Activated naive CD4-positive, alpha-beta T cell treated with anti-CD3 and anti-CD28 coated beads for 36 hours (primary cell): ENCODE measurements at regions of chr3 and their contacts with region 1.

Region 1: DNA sequence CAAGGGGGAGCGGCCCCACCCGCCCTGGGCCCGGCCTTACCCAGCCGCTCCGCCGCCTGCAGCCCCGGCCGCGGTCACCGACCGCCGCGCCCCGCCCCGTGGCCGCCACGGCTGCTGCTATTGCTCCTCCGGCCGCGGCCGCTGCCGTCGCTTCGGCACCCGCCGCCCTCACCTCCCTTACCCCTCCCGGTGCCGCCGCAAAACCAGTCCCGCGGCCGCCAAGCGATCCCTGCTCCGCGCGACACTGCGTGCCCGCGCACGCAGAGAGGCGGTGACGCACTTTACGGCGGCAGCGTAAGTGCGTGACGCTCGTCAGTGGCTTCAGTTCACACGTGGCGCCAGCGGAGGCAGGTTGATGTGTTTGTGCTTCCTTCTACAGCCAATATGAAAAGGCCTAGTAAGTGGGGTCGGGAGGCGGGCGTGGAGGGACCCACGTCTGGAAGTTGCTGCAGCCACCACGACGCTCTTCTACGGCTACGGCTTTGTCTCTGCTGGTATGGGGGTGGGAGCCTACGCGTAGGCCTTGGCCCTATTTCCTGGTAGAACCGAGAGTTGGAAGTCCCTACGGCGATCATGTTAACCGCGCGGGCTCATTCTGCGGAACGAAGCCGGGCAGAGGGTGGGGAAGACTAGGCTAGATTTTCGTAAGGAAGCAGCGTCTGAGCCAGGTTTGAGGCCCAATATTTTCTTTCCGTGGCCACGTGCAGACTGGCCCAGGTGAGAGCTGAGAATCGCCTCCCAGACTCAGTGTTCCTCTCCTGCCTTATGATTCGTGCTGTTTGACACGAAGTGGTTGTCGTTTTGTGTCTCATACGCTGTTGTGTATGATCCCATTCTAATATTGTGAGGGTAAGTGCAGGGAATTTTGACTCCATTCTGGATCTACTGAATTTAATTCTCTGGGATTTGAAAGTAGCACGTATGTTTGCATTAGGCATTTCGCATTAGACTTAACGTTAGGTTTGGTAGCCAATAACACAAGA is at the starts of genes GNL3 and PBRM1:
- DNase-seq: peak; percentile 95
- H3K4me3 Mint-ChIP-seq: peak within 1 kb of the TSS; percentile 90
- H3K27ac Mint-ChIP-seq: peak within 1 kb of the TSS; percentile 91
- H3K4me1 Mint-ChIP-seq: peaks cover 72% of the 10 kb centered on the region
- H3K27me3 Mint-ChIP-seq: no peaks in the 10 kb centered on the region
- total RNA-seq, gene GNL3: 195 to 197 TPM
- total RNA-seq, gene PBRM1: 49.9 to 57.7 TPM

Region 2: DNA sequence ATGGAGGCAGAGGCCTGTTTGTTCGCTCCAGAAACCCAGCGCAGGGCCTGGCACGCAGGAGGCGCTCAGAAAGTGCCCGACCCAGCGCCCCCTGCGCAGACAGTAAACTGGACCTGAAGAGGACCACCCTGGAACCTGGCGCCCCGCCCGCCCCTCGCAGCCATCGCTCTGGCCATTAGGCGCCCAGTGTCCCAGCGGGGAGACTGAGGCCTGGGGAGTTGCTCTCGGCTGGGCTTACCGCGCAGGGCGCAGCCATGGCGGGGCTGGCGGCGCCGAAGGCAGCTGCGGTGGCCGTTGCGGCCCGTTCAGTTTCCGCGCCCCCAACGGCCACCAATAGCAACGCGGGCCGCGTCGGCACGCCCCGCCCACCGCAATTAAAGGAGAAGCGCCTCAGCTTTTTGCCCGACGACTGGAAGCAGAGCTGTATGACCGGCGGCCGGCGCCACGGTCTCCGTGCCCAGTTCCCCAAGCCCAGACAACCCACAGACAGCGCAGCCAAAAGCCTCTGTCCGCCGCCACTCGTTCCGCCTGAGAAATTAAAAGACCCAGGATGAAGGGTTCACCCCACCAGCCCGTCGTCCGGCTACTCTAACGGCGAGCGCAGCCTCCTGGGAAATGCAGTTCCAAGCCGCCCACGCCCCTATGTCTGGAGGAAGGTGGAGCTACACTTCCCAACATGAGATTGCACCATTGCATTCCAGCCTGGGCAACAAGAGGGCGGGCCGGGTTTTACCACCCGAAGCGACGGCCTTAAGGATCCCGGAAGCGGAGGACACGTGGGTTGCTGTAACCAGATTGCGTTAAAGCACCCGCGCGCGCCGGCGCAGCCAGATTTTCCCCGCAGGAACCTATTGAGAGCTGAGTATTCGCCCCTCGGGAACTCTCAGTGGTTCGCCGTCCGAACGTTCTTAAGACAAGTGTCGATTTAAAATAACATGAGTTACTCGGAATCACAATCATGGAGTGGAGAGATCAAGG is 531.6 kb before region 1 on chr3 and contains the start of gene POC1A:
- CTCF ChIA-PET with region 1: no interaction called
- intact Hi-C with region 1: loop called (anchors 1 kb)
- DNase-seq: peak; percentile 96
- H3K4me3 Mint-ChIP-seq: peak within 1 kb of the TSS; percentile 91
- H3K27ac Mint-ChIP-seq: peak within 1 kb of the TSS; percentile 92
- H3K4me1 Mint-ChIP-seq: peaks cover 18% of the 10 kb centered on the region
- H3K27me3 Mint-ChIP-seq: no peaks in the 10 kb centered on the region
- total RNA-seq, gene POC1A: 32.3 to 32.7 TPM

Region 3: GRCh38 chr3:52455283-52456168 is 230.5 kb before region 1 on chr3 and contains the start of gene NISCH:
- CTCF ChIA-PET with region 1: no interaction called
- intact Hi-C with region 1: loop called (anchors 2 kb)
- DNase-seq: peak; percentile 96
- H3K4me3 Mint-ChIP-seq: peak within 1 kb of the TSS; percentile 94
- H3K27ac Mint-ChIP-seq: peak within 1 kb of the TSS; percentile 96
- H3K4me1 Mint-ChIP-seq: peaks cover 35% of the 10 kb centered on the region
- H3K27me3 Mint-ChIP-seq: no peaks in the 10 kb centered on the region
- total RNA-seq, gene NISCH: 50.4 to 52.5 TPM

Region 4: GRCh38 chr3:52536369-52537164 is 149.4 kb before region 1 on chr3 and contains the start of gene UQCC5:
- CTCF ChIA-PET with region 1: no interaction called
- intact Hi-C with region 1: loop called (anchors 1 kb)
- DNase-seq: peak; percentile 98
- H3K4me3 Mint-ChIP-seq: peak within 1 kb of the TSS; percentile 91
- H3K27ac Mint-ChIP-seq: peak within 1 kb of the TSS; percentile 87
- H3K4me1 Mint-ChIP-seq: peaks cover 49% of the 10 kb centered on the region
- H3K27me3 Mint-ChIP-seq: no peaks in the 10 kb centered on the region
- total RNA-seq, gene UQCC5: 12.3 to 13.1 TPM

Region 5: DNA sequence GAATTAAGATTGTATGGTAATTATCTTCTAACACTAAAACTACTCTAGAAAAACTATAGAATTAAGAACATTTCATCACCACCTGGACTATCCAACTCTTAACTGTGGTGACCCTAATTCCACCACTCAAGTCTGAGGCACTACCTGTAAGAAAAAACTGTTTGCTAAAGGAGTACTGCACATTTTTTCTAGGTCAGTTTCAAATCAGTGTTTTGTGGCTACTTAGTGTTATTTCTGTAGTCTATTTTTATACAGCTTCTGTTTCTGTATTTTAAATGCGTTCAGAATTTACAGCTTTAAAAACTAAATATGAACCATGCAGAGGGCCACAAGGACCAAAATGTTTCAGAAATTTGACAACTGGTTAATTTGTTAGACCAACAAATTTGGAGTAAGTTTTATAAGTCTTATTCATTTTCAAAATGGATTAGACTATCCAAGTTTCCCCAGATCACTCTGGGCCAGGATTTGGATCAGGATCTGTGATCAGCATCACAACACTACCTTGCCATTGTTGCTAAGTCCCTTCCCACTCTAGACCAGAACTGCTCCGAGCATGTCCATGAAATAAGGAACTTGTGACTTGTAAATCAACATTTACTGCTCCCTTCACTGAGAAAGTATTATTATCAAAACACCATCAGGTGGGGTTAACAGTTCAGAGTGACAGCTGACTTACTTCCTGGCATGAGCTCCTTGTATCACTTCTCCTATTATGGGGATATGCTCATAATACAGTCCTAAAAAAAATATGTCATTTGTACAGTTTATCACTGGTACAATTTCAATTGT is 11.0 kb after region 1 on chr3:
- CTCF ChIA-PET with region 1: no interaction called
- intact Hi-C with region 1: loop called (anchors 1 kb)
- DNase-seq: no peak
- H3K4me3 Mint-ChIP-seq: no peak overlapping the region
- H3K27ac Mint-ChIP-seq: peak overlapping the region; percentile 81
- H3K4me1 Mint-ChIP-seq: peaks cover 48% of the 10 kb centered on the region
- H3K27me3 Mint-ChIP-seq: no peaks in the 10 kb centered on the region

Region 6: DNA sequence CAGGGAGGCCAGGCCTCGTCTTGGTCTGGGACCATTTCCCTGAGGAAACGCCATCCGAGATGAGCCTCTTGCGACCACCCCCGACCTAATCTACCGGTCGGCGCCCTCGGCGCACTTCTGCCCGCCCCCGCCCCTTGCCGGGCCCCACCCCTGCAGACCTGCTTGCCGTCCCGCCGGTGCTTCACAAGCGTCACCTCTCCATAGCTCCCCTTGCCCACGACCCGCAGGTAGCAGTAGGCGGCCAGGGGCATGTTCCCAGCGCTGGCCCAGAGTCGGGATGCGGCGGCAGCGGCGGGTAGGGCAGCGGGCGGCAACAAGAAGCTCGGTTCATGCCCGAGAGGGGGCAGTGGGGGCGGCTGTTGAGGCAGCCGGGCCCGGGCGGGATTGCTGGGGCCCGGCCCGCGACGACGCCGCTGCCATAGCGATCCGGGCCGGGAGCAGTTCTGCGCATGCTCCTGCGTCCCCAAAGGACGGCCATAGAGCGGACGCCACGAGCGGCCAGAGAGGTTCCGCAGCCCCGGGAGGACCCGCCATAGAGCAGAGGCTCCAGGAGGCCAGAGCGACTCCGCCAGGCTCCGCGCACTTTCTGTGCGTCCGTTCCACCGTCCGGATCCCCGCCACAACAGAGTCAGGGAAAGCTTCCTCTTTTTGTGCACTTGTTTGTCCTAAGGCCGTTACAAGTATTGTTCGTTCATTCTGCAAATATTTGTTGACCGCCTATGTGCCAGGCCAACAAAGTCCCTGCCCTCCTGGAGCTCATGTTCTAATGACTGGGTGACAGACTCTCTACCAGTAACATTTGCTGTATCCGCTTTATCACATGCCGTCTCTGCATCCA is 84.7 kb after region 1 on chr3 and contains the start of gene NEK4:
- CTCF ChIA-PET with region 1: no interaction called
- intact Hi-C with region 1: loop called (anchors 1 kb)
- DNase-seq: peak; percentile 91
- H3K4me3 Mint-ChIP-seq: peak within 1 kb of the TSS; percentile 96
- H3K27ac Mint-ChIP-seq: peak within 1 kb of the TSS; percentile 93
- H3K4me1 Mint-ChIP-seq: peaks cover 20% of the 10 kb centered on the region
- H3K27me3 Mint-ChIP-seq: no peaks in the 10 kb centered on the region
- total RNA-seq, gene NEK4: 12.8 to 15.3 TPM

Region 7: DNA sequence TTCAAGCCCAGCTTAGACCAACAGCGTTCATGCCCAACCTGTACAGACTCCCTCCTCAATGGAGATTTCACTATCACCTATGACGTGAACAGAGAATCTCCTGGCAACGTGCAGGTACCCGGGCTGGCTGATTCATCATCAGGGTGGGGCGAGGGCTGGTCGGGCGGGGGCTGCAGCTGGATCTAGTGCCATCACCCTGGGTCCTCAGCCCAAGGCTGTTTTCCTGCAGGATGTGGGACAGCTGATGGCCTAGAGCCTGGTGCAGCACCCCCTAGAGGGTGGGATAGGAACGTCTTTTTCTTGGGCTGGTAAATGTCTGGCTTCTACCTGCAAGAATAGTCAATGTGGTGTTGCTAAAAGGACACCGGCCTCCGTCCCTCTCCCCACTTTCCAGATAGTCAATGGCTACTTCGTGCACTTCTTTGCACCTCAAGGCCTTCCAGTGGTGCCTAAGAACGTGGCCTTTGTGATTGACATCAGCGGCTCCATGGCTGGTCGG is 113.0 kb after region 1 on chr3:
- CTCF ChIA-PET with region 1: no interaction called
- intact Hi-C with region 1: no loop called
- DNase-seq: peak; percentile 36
- H3K4me3 Mint-ChIP-seq: no peak overlapping the region
- H3K27ac Mint-ChIP-seq: no peak overlapping the region
- H3K4me1 Mint-ChIP-seq: no peaks in the 10 kb centered on the region
- H3K27me3 Mint-ChIP-seq: no peaks in the 10 kb centered on the region

Region 8: DNA sequence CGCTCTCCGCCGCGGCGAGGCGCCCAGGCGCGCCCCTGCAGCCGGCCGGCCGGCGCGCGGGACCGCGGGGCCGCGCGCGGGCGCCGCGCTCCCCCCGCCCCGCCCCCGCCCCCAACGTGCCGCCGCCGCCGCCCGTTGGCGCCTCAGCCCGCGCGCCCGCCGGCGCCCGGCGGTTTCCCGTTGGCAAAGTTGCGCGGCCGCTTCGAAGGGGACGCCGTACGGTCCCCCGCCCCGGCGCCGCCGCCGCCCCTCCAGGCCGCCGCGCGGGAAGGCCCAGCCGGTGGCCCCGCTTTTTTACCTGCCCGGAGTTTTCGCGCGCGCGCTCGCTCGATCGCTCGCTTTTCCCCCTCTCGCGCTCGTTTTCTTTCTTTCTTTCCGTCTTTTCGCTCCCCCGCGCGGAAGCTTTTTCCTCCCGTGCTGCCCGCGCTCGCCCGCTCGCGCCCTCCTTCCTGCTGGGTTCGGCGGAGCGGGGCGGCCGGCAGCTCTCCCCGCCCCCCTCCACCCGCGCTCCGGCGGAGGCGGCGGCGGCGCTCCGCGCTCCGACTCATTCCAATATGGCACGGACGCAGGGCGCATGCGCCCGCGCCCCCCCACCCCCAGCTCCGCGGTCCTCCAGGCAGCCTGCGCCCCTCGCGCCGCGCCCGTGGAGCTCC is 359.6 kb after region 1 on chr3 and contains the start of gene SFMBT1:
- CTCF ChIA-PET with region 1: no interaction called
- intact Hi-C with region 1: loop called (anchors 1 kb)
- DNase-seq: peak; percentile 68
- H3K4me3 Mint-ChIP-seq: peak within 1 kb of the TSS; percentile 90
- H3K27ac Mint-ChIP-seq: peak within 1 kb of the TSS; percentile 90
- H3K4me1 Mint-ChIP-seq: peaks cover 42% of the 10 kb centered on the region
- H3K27me3 Mint-ChIP-seq: no peaks in the 10 kb centered on the region
- total RNA-seq, gene SFMBT1: 15.1 to 15.4 TPM